ENCODE measurements at regions of chr1 and their contacts with region 1.

Region 1: GRCh38 chr1:160607011-160607671 is 27.8 kb upstream of the CD84 start:
- DNase-seq: no peak
- ATAC-seq: peak; percentile 94
- H3K4me3 Mint-ChIP-seq: peak overlapping the region; percentile 42
- H3K27ac Mint-ChIP-seq: peak overlapping the region; percentile 84
- H3K4me1 Mint-ChIP-seq: peaks cover 33% of the 10 kb centered on the region
- H3K27me3 Mint-ChIP-seq: no peaks in the 10 kb centered on the region
- CTCF ChIP-seq: no peak

Region 2: GRCh38 chr1:160342953-160343869 is 263.9 kb before region 1 on chr1 and contains the starts of genes COPA and NCSTN:
- CTCF ChIA-PET with region 1: no interaction called
- POLR2A ChIA-PET with region 1: no interaction called
- intact Hi-C with region 1: loop called (anchors 1 kb)
- DNase-seq: peak; percentile 83
- ATAC-seq: peak; percentile 88
- H3K4me3 Mint-ChIP-seq: peak within 1 kb of the TSS; percentile 99
- H3K27ac Mint-ChIP-seq: peak within 1 kb of the TSS; percentile 98
- H3K4me1 Mint-ChIP-seq: peaks cover 68% of the 10 kb centered on the region
- H3K27me3 Mint-ChIP-seq: no peaks in the 10 kb centered on the region
- CTCF ChIP-seq: no peak
- total RNA-seq, gene COPA: 161 and 174 TPM in 2 replicates
- total RNA-seq, gene NCSTN: 108 and 118 TPM in 2 replicates

Region 3: DNA sequence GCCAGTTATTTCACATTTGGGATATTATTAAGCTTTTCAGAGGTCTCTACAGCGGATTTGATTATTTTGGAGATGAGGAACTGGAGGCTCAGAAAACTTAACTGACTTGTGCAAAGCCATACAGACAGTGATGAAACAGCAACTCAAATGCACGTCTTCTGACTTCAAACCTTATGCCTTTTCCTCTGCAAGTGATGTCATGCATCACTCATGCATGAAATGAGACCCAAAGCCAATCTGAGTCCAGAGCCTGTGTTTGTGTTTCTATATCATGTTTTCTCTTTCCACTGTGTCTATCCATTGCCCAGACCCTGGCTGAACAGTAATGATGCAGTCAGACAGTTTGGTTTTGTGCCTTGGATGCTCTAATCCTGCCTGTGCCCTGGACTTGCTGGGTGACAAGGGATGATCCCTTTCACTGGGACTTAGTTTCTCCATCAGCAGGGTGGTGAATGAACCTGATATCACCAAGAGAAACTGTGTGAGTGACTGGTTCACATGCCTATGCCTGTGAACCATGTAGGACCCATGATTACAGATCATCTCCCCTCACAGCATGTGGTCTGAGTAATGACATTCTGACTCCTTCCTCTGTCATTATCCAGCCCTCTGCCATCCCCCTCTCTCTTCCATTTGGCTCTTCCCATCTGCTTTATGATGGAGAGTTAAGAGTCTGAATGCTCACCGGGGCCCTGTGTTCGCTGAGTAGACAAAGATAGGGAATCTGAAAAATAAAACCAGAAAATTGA is 117.5 kb before region 1 on chr1:
- CTCF ChIA-PET with region 1: interaction called, 5 read pairs
- POLR2A ChIA-PET with region 1: interaction called, 5 read pairs
- intact Hi-C with region 1: loop called (anchors 2 kb)
- DNase-seq: no peak
- ATAC-seq: peak; percentile 8
- H3K4me3 Mint-ChIP-seq: peak overlapping the region; percentile 49
- H3K27ac Mint-ChIP-seq: no peak overlapping the region
- H3K4me1 Mint-ChIP-seq: peaks cover 3% of the 10 kb centered on the region
- H3K27me3 Mint-ChIP-seq: no peaks in the 10 kb centered on the region
- CTCF ChIP-seq: no peak

Region 4: GRCh38 chr1:160550572-160551034 is 56.5 kb before region 1 on chr1:
- CTCF ChIA-PET with region 1: interaction called, 52 read pairs
- POLR2A ChIA-PET with region 1: interaction called, 10 read pairs
- intact Hi-C with region 1: no loop called
- DNase-seq: no peak
- ATAC-seq: no peak
- H3K4me3 Mint-ChIP-seq: no peak overlapping the region
- H3K27ac Mint-ChIP-seq: peak overlapping the region; percentile 90
- H3K4me1 Mint-ChIP-seq: peaks cover 86% of the 10 kb centered on the region
- H3K27me3 Mint-ChIP-seq: no peaks in the 10 kb centered on the region
- CTCF ChIP-seq: no peak

Region 5: GRCh38 chr1:160641323-160642280 is 34.5 kb after region 1 on chr1:
- CTCF ChIA-PET with region 1: no interaction called
- POLR2A ChIA-PET with region 1: no interaction called
- intact Hi-C with region 1: no loop called
- DNase-seq: no peak
- ATAC-seq: peak; percentile 73
- H3K4me3 Mint-ChIP-seq: peak overlapping the region; percentile 95
- H3K27ac Mint-ChIP-seq: peak overlapping the region; percentile 91
- H3K4me1 Mint-ChIP-seq: peaks cover 95% of the 10 kb centered on the region
- H3K27me3 Mint-ChIP-seq: no peaks in the 10 kb centered on the region
- CTCF ChIP-seq: no peak

Region 6: GRCh38 chr1:160731990-160732389 is 124.8 kb after region 1 on chr1:
- CTCF ChIA-PET with region 1: no interaction called
- POLR2A ChIA-PET with region 1: no interaction called
- intact Hi-C with region 1: no loop called
- DNase-seq: no peak
- ATAC-seq: no peak
- H3K4me3 Mint-ChIP-seq: peak overlapping the region; percentile 1
- H3K27ac Mint-ChIP-seq: peak overlapping the region; percentile 88
- H3K4me1 Mint-ChIP-seq: peaks cover 39% of the 10 kb centered on the region
- H3K27me3 Mint-ChIP-seq: no peaks in the 10 kb centered on the region
- CTCF ChIP-seq: no peak